ENCODE measurements at regions of chr6 and their contacts with region 1.

Region 1: DNA sequence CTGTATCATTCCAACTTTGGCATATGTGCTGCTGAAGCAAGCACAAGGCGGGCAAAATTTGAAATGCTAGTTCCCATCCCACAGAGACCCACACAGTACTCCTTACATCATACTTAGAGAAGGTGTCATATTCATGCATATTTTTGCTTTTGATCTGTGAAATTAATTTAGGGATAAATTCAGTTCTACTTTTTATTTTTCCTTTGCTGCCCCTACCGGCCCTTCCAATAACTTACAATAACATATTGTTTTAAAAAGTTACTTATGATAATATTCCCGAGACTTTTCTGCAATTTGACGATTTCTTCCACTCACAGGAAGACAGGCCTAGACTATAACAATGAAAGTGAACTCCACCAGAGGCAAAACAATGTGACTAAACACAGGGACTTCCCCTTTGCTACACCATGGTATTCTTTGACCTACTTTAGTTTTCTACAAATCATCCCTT is 35.0 kb downstream of the SESN1 start:
- DNase-seq: peak in 1 of 7 donors; percentile 28
- H3K4me3 ChIP-seq: peak overlapping the region in 1 of 4 donors; percentile 19
- H3K27ac ChIP-seq: peak overlapping the region; percentile 22 to 78 (median 49)
- H3K4me1 ChIP-seq: peaks cover 29 to 47% of the 10 kb centered on the region in 2 donors
- H3K27me3 ChIP-seq: no peaks in the 10 kb centered on the region
- CTCF ChIP-seq: peak in 5 of 6 experiments; percentile 11 to 39 (median 19)
- POLR2A ChIP-seq: no peak

Region 2: DNA sequence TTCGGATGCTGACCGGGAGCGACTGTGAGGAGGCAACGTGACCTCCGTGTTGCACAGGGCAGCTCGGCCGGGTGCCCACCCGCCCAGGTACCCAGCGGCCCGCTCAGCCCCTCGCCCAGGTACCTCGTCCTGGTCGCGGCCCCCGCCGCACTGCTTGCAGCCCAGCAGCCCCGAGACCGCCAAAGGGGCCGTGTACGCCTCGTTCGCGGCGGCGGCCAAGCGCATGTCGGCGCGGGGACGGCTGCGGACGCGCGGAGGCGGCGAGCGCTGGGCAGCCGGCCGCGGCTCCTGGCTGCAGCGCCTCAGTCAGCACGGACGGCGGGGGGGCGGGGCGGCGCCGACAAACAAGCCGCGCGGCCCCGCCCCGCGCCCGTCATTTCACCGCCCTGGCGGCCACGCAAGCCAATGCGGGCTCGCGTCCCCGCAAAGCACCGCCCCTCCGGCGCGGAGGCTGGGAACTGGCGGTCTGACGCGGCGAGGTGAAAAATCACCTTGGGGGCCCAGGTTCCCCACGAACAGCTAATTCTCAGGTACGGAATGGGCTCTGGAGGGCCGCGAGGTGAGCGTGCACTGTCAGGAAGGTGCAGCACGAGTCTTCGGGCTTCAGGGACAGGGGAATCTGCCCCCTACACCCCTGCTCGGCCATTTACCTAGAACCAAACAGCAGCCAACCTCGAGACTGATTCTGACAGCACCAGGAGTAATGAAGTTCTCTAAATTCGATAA is 50.2 kb before region 1 on chr6:
- intact Hi-C with region 1: loop called in 1 of 2 experiments (anchors 10 kb)
- DNase-seq: peak; percentile 91 to 98 (median 96)
- H3K4me3 ChIP-seq: peak overlapping the region; percentile 41 to 96 (median 52)
- H3K27ac ChIP-seq: peak overlapping the region; percentile 68 to 99 (median 95)
- H3K4me1 ChIP-seq: peaks cover 6 to 45% of the 10 kb centered on the region in 2 donors
- H3K27me3 ChIP-seq: no peaks in the 10 kb centered on the region
- CTCF ChIP-seq: peak in 4 of 6 experiments; percentile 29 to 77 (median 52)
- POLR2A ChIP-seq: peak; percentile 92 to 99

Region 3: DNA sequence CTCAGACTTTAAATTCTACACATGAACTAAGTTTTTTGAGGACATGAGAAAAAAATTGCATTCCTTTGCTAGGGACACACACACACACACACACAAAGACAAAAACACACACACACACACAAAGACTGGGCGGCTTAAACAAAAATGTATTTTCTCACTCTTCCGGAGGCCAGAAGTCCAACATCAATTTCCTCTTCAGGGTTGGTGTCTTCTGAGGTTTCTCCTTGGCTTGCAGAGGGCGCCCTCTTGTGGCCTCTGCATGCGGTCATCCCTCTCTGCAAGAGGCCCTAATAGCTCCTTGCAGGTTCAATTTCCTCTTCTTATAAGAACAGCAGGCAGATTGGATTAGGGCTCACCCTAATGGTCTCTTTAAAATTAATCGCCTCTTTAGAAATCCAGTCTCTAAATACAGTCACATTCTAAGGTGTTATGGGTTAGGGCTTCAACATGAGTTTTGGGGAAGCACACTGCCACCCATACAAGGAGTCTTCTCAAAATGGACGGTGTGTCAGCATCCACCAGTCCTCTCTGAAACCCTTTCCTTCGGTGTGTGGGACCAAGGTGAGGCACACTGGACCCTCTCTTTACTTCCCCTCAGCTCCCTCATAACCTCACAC is 979.9 kb after region 1 on chr6:
- intact Hi-C with region 1: no loop called
- DNase-seq: peak; percentile 82 to 96 (median 88)
- H3K4me3 ChIP-seq: peak overlapping the region in 2 of 4 donors; percentile 5 to 30
- H3K27ac ChIP-seq: no peak overlapping the region
- H3K4me1 ChIP-seq: no peaks in the 10 kb centered on the region
- H3K27me3 ChIP-seq: no peaks in the 10 kb centered on the region
- CTCF ChIP-seq: peak; percentile 87 to 96 (median 90)
- POLR2A ChIP-seq: no peak